Activated CD4-positive, alpha-beta memory T cell treated with anti-CD3 and anti-CD28 coated beads for 36 hours (primary cell): ENCODE measurements at regions of chr7 and their contacts with region 1.

Region 1: DNA sequence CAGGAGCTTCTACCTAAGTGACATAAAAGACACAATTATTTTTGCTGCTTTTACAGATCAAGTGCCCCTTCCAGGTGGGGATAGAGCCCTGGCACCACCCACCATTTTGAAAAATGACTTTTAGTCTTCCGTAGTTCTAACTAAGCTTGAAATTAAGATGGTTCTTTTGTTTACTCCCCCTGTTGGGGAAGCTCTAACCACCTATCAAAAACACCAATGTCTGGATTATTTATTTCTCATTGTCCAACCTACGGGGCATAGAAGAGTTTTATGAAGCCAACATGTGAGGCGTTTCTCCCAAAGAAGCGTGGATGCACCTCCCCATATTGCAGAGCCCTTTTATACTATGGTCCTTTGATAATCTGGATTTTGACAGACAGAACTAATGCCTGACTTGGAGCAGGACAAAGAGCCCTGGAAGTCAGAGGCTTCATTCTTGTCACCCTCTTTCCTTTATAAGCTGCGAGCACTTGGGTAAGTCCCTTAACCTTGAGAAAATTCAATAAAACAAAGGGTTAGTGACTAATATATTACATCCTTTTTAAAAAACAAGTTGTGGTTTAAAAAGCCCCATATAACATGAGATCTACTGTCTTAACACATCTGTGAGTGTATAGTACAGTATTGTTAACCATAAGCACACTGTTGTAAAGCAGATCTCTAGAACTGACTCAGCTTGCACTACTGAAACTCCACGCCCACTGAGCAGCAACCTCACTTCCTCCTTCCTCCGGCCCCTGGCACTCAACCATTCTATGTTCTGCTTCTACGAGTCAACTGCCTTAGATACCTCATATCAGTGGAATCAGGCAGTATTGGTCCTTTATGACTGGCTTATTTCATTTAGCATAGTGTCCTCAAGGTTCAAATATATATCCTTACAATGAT is 67.5 kb downstream of the ATXN7L1 start:
- DNase-seq: peak; percentile 96
- H3K4me3 Mint-ChIP-seq: peak overlapping the region; percentile 21
- H3K27ac Mint-ChIP-seq: peak overlapping the region; percentile 67
- H3K4me1 Mint-ChIP-seq: peaks cover 57% of the 10 kb centered on the region
- H3K27me3 Mint-ChIP-seq: no peaks in the 10 kb centered on the region

Region 2: DNA sequence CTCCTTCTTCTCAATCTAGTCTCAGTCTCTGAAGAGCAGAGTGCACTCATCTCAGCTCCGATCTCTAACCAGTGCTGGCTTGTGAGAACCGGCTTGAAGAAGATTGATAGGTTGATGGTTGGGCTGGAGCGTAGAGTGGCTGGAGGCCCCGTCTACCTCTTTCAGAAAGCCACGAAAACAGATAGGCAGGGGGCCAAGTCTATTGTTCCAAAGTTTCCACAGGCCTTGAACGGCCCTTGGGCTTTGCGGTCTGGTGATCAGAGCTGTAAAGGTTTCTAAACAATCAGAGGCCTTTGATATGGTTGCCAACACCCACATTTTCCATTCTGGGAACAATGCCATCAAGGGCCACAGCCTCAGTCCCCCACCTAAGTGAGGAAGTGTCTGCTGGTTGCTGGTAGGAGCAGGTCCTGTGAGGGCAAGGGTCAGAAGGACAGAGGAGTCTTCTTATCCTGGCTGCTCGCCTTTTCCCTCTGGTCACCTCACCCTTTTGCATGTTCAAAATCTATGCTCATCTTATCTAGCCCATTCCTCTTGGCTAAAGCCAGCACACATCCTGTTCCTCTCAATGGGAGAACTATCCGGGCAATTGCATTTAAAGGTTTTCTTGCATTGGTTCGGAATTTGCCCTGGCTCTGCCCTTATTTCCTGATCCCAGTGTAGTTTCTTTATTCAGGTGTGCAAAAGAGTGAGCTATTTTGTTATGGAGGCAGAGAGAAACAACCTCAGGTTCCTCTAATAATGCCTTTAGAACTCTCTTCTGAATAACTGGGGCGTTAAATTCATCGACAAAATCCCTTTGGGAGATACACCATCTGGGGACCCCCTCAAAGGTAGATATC is 865.2 kb before region 1 on chr7:
- CTCF ChIA-PET with region 1: no interaction called
- POLR2A ChIA-PET with region 1: no interaction called
- intact Hi-C with region 1: loop called (anchors 5 kb)
- DNase-seq: peak; percentile 89
- H3K4me3 Mint-ChIP-seq: peak overlapping the region; percentile 89
- H3K27ac Mint-ChIP-seq: peak overlapping the region; percentile 98
- H3K4me1 Mint-ChIP-seq: peaks cover 62% of the 10 kb centered on the region
- H3K27me3 Mint-ChIP-seq: no peaks in the 10 kb centered on the region

Region 3: GRCh38 chr7:105691733-105692564 is 117.0 kb before region 1 on chr7:
- CTCF ChIA-PET with region 1: no interaction called
- POLR2A ChIA-PET with region 1: interaction called, 3 read pairs
- intact Hi-C with region 1: loop called (anchors 1 kb)
- DNase-seq: peak; percentile 78
- H3K4me3 Mint-ChIP-seq: peak overlapping the region; percentile 78
- H3K27ac Mint-ChIP-seq: peak overlapping the region; percentile 76
- H3K4me1 Mint-ChIP-seq: peaks cover 47% of the 10 kb centered on the region
- H3K27me3 Mint-ChIP-seq: no peaks in the 10 kb centered on the region

Region 4: GRCh38 chr7:105782391-105783042 is 26.4 kb before region 1 on chr7:
- CTCF ChIA-PET with region 1: no interaction called
- POLR2A ChIA-PET with region 1: interaction called, 5 read pairs
- intact Hi-C with region 1: loop called (anchors 1 kb)
- DNase-seq: peak; percentile 80
- H3K4me3 Mint-ChIP-seq: no peak overlapping the region
- H3K27ac Mint-ChIP-seq: no peak overlapping the region
- H3K4me1 Mint-ChIP-seq: peaks cover 14% of the 10 kb centered on the region
- H3K27me3 Mint-ChIP-seq: no peaks in the 10 kb centered on the region

Region 5: DNA sequence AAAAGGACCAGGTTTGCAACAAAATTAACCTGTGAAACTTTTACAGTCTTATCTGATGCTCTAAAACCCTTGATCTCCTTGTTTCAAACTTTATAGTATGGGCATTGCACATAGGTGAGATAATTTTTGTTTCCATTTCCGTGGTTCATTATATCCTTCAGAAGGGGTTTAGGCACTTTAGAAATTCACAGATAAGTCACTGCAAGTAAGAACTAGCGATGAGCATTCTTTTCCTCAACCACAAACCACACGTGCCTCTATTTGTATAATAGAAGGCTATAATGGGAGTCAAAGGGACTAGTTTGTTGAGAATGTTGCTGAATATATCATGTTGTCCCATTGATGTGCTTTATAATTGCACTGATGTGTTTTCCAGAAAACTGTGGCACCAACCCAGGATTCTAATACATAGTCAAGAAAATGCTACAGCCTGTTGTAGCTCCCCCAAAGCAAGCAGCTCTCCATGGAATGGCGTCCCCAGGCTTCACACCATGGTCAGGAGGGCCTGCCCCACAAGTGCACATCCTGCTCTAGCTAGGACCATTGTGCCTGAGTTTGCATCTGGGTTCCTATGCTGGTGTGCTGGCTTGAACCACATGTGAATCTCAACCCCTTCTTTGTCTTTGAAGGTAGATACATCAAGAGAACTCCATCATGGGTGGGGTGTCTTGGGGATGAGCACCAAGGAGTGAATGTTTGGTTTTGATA is 81.5 kb after region 1 on chr7:
- CTCF ChIA-PET with region 1: no interaction called
- POLR2A ChIA-PET with region 1: no interaction called
- intact Hi-C with region 1: loop called (anchors 1 kb)
- DNase-seq: peak; percentile 29
- H3K4me3 Mint-ChIP-seq: no peak overlapping the region
- H3K27ac Mint-ChIP-seq: no peak overlapping the region
- H3K4me1 Mint-ChIP-seq: peaks cover 12% of the 10 kb centered on the region
- H3K27me3 Mint-ChIP-seq: no peaks in the 10 kb centered on the region

Region 6: GRCh38 chr7:106022193-106022821 is 213.4 kb after region 1 on chr7:
- CTCF ChIA-PET with region 1: interaction called, 3 read pairs
- POLR2A ChIA-PET with region 1: interaction called, 4 read pairs
- intact Hi-C with region 1: loop called (anchors 1 kb)
- DNase-seq: peak; percentile 85
- H3K4me3 Mint-ChIP-seq: peak overlapping the region; percentile 14
- H3K27ac Mint-ChIP-seq: peak overlapping the region; percentile 76
- H3K4me1 Mint-ChIP-seq: peaks cover 40% of the 10 kb centered on the region
- H3K27me3 Mint-ChIP-seq: no peaks in the 10 kb centered on the region

Region 7: DNA sequence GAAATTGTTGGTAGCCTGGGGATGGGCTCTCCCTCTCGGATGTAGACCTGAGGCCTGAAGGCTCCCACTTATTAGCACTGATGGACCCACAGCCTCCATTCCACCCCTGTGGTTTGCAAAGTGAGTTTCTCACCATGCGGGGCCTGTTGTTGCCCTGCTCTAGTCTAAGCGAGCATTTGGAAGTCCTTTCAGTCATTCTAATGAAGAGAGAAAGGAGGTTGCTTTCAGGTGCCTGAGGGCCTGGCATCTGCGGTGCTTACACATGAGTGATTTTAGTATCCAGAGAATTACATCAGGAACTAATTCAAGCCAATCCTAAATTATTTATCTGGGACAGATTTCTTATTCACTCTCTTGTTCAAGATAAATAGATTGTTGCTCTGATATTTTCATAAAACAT is 414.2 kb after region 1 on chr7:
- CTCF ChIA-PET with region 1: no interaction called
- POLR2A ChIA-PET with region 1: no interaction called
- intact Hi-C with region 1: no loop called
- DNase-seq: no peak
- H3K4me3 Mint-ChIP-seq: no peak overlapping the region
- H3K27ac Mint-ChIP-seq: no peak overlapping the region
- H3K4me1 Mint-ChIP-seq: no peaks in the 10 kb centered on the region
- H3K27me3 Mint-ChIP-seq: peaks cover 12% of the 10 kb centered on the region